Right ventricle myocardium inferior (tissue), 1 donor: ENCODE measurements at regions of chr5 and their contacts with region 1.

Region 1: DNA sequence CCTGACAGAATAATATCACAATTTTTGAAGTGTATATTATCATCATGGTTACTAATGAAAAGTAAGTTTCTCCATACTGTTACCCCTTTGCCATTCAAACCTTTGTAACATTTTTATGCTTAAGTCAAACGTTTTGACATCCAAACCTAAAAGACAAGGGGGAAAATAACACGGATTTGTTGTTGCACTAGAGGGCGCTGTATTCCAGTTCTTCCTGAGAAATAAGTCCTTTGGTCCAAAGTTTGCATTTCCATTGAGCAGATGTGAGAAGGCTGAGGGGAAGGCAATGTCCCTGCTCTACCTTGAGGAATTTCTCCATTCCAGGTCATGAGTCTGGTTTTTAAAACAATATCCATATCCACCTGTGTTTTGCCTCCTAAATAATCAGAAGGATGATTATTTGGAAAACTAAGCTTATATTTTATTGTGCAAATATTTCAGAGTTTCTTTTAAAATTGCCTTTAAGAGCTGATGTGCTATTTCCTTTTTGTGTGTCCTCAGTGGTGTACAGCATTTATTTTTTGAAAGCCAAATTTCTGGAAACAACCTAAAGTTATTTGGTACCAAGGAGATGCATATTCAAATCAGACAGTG is 9.7 kb downstream of the LECT2 start:
- DNase-seq: no peak
- ATAC-seq: peak; percentile 50

Region 2: DNA sequence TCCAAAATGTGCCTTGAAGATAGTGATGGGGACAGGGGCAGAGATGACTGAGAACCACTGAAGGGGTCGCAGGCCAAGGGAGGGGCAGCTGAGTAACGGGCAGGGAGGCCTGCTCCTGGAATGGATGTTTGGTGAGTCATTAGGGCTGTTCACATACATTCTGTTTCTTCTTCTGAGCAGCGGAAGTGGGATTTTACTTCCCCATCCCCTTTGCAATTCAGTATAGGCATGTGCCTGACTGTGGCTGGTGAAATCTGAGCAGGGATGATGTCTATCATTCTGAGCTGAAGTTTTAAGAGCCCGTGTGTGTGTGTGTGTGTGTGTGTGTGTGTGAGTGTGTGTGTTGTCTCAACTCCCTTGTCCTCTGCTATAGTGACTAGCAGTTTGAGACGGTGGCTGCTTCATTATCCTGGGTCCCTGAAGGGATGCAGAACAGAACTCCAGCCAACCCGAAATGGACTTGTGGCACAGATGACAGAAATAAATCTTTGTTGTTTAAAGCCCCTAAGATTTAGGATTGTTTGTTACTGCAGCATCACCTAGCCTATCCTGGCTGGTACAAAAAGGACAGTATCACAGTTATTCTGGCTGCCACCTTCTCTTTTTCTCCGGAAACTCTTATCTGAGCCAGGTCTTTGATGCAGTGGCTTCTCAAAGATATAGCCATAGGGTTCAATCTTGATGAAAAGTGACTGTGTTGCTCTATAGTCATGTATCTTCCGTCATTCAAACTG is 54.5 kb after region 1 on chr5:
- intact Hi-C with region 1: no loop called
- DNase-seq: no peak
- ATAC-seq: peak; percentile 53

Region 3: GRCh38 chr5:136062366-136063274 is 117.6 kb after region 1 on chr5:
- intact Hi-C with region 1: loop called (anchors 2 kb)
- DNase-seq: no peak
- ATAC-seq: no peak

Region 4: DNA sequence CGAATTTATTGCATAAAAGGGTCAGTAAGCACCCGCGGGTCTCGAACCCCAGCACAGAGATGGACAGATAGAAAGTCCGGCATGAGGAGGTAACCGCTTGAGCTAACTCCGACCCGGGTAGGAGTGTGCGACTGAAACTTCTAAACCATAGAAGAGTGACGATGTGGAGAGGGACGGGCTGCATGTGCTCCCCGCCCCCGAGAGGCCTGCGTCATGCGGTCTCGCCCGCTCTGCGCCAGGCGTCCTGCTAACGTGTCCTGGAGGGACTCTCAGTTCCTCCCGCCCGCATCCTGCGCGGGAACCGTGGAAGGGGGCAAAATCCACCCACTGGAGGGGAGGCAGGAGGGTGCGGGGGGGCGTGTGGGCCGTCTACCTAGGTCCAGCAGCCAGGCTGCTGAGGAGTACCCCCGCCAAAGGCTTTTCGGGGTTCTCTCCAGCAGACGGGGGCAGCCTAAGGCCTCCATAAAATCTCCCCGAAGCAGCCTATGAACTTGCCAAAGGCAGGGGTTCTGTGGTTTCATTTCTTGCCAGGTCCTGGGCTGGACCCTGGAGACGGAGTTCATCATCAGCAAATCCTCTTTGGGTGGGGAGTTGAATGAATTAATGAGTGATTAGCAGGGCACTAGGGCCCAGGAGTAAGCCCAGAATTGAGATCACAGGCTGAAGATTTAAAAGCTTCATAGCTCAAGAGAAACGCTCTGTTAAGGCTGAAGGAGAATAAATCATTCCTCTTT is 135.6 kb after region 1 on chr5:
- intact Hi-C with region 1: loop called (anchors 1 kb)
- DNase-seq: peak; percentile 95
- ATAC-seq: peak; percentile 96

Region 5: DNA sequence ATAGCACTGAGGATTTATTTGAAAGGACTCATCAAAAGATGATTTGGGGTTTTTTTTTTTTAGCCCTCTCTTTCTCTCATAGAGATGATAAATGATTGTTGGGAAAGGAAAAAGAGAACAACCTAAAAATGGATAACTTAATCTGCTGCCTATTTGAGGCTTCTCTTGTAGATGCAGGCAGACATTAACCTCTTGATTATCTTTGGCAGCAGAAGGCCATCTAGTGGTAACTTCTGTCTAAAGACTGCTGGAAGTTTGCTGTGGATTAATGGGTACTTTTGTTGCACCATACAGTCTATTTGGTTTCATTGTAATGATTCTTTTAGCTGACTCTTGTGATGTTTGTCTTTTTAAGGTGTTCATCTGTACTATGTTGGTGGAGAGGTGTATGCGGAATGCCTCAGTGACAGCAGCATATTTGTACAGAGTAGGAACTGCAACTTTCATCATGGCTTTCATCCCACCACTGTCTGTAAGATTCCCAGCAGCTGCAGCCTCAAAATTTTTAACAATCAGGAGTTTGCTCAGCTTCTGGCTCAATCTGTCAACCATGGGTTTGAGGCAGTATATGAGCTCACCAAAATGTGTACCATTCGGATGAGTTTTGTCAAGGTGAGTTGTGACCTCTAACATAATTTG is 229.1 kb after region 1 on chr5:
- intact Hi-C with region 1: loop called (anchors 2 kb)
- DNase-seq: no peak
- ATAC-seq: no peak

Region 6: DNA sequence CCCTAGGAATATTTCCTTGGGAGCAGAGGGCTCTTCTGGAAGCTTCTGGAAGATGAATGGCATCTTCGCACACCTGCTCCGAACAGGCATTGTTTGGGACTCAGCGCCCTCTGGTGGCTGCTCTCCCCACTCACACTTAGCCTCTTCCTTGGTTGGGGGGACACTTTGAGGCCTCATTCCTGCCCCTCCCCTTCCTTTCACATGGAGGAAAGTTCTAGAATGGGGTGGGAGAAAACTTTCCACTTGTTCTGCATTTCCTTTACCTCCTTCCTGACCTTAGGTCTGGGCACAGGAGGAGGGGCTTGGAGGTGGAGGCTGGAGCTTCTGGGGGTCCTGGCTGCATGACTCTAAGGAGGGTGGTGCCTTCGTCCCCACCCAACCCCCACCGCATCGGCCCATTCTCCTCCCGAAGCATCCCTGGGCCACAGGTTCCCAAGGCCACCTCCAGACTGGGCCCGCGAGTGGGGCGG is 267.2 kb after region 1 on chr5:
- intact Hi-C with region 1: loop called (anchors 5 kb)
- DNase-seq: no peak
- ATAC-seq: no peak